ENCODE measurements at regions of chr6 and their contacts with region 1.

Region 1: DNA sequence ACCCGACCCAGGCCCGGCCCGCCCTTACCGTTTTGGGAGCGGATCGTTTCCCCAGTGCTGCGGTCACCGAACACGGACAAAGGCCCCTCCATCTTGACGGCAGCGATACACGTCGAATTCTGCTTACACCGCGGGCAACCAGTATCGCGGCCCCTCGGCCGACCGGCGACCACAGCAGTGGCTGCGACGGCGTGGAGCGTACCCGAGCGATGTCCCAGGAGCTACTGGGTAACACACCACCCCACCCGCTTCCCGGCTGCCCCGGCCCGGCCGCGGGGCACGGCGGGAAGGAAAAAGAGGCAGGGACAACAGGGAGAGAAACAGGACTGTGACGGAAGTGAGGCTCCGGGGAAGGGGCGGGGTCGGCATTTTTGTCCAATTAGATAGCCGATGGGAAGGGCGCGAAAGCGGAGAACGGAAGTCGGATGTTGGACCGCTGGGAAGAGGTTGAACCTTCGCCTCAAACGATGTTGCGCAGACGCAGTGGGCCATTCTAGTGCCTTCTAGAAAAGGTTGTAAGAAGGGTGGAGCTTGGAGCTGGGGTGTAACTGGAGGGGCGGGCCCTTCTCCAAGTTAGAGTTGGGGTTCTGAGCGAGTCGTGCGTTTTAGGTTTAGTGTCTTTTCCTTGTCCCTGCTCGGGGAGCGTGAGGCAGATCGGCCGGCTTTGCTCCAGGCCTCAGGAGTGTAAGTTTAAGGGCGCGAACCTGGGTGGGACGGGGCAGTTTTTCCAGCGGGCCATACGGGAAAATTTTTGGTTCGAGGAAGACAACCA is at the start of gene TCP1:
- DNase-seq: peak; percentile 93 to 100
- ATAC-seq: peak; percentile 73 to 90 (median 80)
- H3K4me3 ChIP-seq: peak within 1 kb of the TSS; percentile 72
- H3K4me3 Mint-ChIP-seq: peak within 1 kb of the TSS; percentile 99
- H3K27ac ChIP-seq: peak within 1 kb of the TSS; percentile 90
- H3K27ac Mint-ChIP-seq: peak within 1 kb of the TSS; percentile 95 to 98
- H3K4me1 ChIP-seq: peaks cover 25% of the 10 kb centered on the region
- H3K4me1 Mint-ChIP-seq: peaks cover 52 to 60% of the 10 kb centered on the region in 2 donors
- H3K27me3 ChIP-seq: no peaks in the 10 kb centered on the region
- H3K27me3 Mint-ChIP-seq: no peaks in the 10 kb centered on the region
- CTCF ChIP-seq: no peak
- total RNA-seq, gene TCP1: 192 to 230 (median 218) TPM

Region 2: GRCh38 chr6:159693128-159693893 is 96.3 kb before region 1 on chr6 and contains the start of gene SOD2:
- intact Hi-C with region 1: loop called (anchors 1 kb)
- DNase-seq: peak; percentile 83 to 90
- ATAC-seq: peak; percentile 83 to 88 (median 84)
- H3K4me3 ChIP-seq: peak within 1 kb of the TSS; percentile 58
- H3K4me3 Mint-ChIP-seq: peak within 1 kb of the TSS; percentile 90
- H3K27ac ChIP-seq: peak within 1 kb of the TSS; percentile 88
- H3K27ac Mint-ChIP-seq: peak within 1 kb of the TSS; percentile 58 to 90
- H3K4me1 ChIP-seq: peaks cover 26% of the 10 kb centered on the region
- H3K4me1 Mint-ChIP-seq: peaks cover 32 to 36% of the 10 kb centered on the region in 2 donors
- H3K27me3 ChIP-seq: no peaks in the 10 kb centered on the region
- H3K27me3 Mint-ChIP-seq: no peaks in the 10 kb centered on the region
- CTCF ChIP-seq: no peak
- total RNA-seq, gene SOD2: 81.3 to 156 (median 138) TPM

Region 3: GRCh38 chr6:159726918-159727716 is 62.4 kb before region 1 on chr6 and contains the start of gene WTAP:
- intact Hi-C with region 1: loop called (anchors 1 kb)
- DNase-seq: peak; percentile 92 to 99
- ATAC-seq: peak; percentile 85 to 94 (median 85)
- H3K4me3 ChIP-seq: peak within 1 kb of the TSS; percentile 92
- H3K4me3 Mint-ChIP-seq: peak within 1 kb of the TSS; percentile 94
- H3K27ac ChIP-seq: peak within 1 kb of the TSS; percentile 95
- H3K27ac Mint-ChIP-seq: peak within 1 kb of the TSS; percentile 97 to 98
- H3K4me1 ChIP-seq: peaks cover 14% of the 10 kb centered on the region
- H3K4me1 Mint-ChIP-seq: peaks cover 32 to 52% of the 10 kb centered on the region in 2 donors
- H3K27me3 ChIP-seq: no peaks in the 10 kb centered on the region
- H3K27me3 Mint-ChIP-seq: no peaks in the 10 kb centered on the region
- CTCF ChIP-seq: no peak
- total RNA-seq, gene WTAP: 141 to 167 (median 164) TPM

Region 4: GRCh38 chr6:159742165-159742564 is 47.4 kb before region 1 on chr6:
- intact Hi-C with region 1: loop called (anchors 5 kb)
- DNase-seq: no peak
- ATAC-seq: no peak
- H3K4me3 ChIP-seq: no peak overlapping the region
- H3K4me3 Mint-ChIP-seq: no peak overlapping the region
- H3K27ac ChIP-seq: no peak overlapping the region
- H3K27ac Mint-ChIP-seq: peak overlapping the region in 1 of 2 donors; percentile 71
- H3K4me1 ChIP-seq: no peaks in the 10 kb centered on the region
- H3K4me1 Mint-ChIP-seq: peaks cover 30 to 31% of the 10 kb centered on the region in 2 donors
- H3K27me3 ChIP-seq: no peaks in the 10 kb centered on the region
- H3K27me3 Mint-ChIP-seq: no peaks in the 10 kb centered on the region
- CTCF ChIP-seq: no peak

Region 5: DNA sequence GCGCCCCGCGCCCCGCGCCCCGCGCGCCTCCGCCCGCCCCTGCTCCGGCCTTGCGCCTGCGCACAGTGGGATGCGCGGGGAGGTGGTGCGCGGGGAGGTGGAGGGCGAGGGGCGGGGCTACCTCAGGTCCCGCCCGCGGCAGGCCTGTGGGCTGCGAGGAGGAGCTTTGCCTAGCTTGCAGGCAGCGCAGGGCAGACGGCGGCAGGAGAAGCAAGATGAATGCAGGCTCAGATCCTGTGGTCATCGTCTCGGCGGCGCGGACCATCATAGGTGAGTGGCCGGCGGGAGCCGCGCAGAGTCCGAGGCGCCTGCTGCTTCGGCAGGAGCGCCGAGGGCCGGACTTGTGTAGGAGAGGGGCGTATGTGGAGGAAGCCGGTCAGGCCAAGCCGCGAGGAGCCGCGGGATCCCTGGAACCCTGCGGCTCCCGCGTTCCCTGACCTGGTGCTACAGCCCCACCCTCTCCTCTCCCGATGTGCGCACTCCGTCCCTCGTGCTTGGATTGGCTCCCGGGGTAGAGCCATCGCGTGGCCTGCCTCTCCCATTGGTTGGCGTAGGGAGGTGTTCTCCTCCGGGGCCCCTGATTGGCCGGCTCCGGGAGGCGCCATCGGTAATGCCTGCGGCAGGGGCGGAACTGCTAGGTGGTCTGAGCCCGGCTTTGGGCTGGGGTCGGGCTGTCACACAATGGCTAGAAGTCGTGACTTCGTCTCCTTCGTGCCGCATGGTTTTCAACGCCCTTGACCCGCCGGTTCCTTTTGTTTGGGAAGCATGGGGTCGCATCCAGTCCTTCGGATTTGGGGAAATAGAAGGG is 27.5 kb before region 1 on chr6 and contains the start of gene ACAT2:
- intact Hi-C with region 1: loop called (anchors 1 kb)
- DNase-seq: peak; percentile 89 to 97
- ATAC-seq: peak; percentile 83 to 93 (median 84)
- H3K4me3 ChIP-seq: peak within 1 kb of the TSS; percentile 98
- H3K4me3 Mint-ChIP-seq: peak within 1 kb of the TSS; percentile 94
- H3K27ac ChIP-seq: peak within 1 kb of the TSS; percentile 98
- H3K27ac Mint-ChIP-seq: peak within 1 kb of the TSS; percentile 64 to 99
- H3K4me1 ChIP-seq: peaks cover 14% of the 10 kb centered on the region
- H3K4me1 Mint-ChIP-seq: peaks cover 30 to 31% of the 10 kb centered on the region in 2 donors
- H3K27me3 ChIP-seq: no peaks in the 10 kb centered on the region
- H3K27me3 Mint-ChIP-seq: no peaks in the 10 kb centered on the region
- CTCF ChIP-seq: no peak
- total RNA-seq, gene ACAT2: 21.7 to 31.7 (median 26.5) TPM

Region 6: DNA sequence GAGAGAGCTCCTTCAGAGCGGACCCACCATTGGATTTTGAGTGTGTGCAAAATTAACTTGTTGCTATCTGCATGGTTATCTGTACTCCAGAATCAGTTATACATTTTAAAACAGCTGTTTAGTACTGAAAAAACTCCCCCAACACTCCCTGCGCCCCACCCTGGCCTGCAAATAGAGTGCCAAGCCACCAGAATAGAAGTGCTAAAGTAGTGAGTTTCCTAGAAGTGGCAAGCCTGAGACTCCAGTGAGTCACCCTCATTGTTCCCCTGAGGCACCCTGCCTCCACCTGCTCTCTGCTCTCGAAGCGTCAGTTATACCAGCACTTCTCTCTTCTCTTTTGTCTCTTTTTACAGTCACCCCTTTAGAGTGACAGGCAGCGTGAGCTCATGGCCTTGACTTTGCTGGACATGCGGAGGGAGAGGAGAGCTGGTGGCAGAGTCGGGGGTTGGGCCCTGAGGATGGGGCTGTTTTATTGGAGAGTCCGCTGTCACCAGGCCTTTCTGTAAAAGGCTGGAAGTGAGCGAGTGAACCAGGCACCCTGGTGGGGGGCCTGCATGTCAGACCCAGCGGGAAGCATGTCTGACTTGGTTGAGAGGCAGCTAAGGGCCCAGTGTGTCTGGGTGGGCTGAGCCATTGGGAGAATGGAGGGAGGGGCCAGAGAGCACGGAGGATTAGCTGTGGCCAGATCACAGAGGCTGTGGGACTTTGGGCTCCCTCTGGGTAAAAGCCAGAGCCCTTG is 189.7 kb after region 1 on chr6:
- intact Hi-C with region 1: loop called (anchors 2 kb)
- DNase-seq: peak; percentile 74 to 77
- ATAC-seq: peak; percentile 68 to 86 (median 80)
- H3K4me3 ChIP-seq: no peak overlapping the region
- H3K4me3 Mint-ChIP-seq: peak overlapping the region; percentile 94
- H3K27ac ChIP-seq: peak overlapping the region; percentile 93
- H3K27ac Mint-ChIP-seq: peak overlapping the region; percentile 94 to 99
- H3K4me1 ChIP-seq: peaks cover 81% of the 10 kb centered on the region
- H3K4me1 Mint-ChIP-seq: peaks cover 97 to 100% of the 10 kb centered on the region in 2 donors
- H3K27me3 ChIP-seq: no peaks in the 10 kb centered on the region
- H3K27me3 Mint-ChIP-seq: no peaks in the 10 kb centered on the region
- CTCF ChIP-seq: no peak